ENCODE measurements at regions of chr3 and their contacts with region 1.

Region 1: GRCh38 chr3:66822186-66823008 is 175.7 kb upstream of the KBTBD8 start:
- DNase-seq: peak; percentile 46
- H3K4me3 ChIP-seq: no peak overlapping the region
- H3K27ac ChIP-seq: no peak overlapping the region
- H3K4me1 ChIP-seq: no peaks in the 10 kb centered on the region
- H3K27me3 ChIP-seq: no peaks in the 10 kb centered on the region
- CTCF ChIP-seq: peak; percentile 64

Region 2: DNA sequence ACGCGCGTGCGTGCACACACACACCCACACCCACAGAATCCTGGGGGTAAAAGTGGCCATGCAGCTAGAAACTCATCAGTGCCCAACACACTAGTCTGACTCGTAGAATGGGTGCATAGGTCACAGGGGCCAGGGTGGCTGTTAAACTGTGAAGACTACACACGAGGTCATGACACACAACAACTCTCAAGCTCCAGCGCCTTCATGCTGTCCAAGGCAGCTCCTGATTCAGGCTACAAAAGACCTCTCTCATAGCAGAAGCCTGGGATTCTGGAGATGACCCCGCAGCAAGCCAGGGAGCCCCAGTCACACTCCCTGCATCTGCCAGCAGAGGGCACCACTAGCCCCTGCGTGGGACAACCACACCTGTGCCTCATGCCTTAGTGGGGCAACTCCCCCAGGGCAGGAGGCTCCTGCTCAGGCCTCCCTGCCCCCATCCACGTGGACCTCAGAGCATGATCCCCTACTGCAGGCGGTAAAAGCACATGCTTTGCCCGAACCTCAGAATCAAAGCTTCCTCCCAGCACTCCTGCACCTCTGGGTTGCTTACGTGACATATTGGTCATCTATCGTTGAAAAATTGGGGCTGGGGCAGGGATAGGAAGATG is 414.7 kb before region 1 on chr3:
- CTCF ChIA-PET with region 1: interaction called, 4 read pairs
- POLR2A ChIA-PET with region 1: no interaction called
- intact Hi-C with region 1: loop called (anchors 2 kb)
- DNase-seq: peak; percentile 62
- H3K4me3 ChIP-seq: no peak overlapping the region
- H3K27ac ChIP-seq: no peak overlapping the region
- H3K4me1 ChIP-seq: no peaks in the 10 kb centered on the region
- H3K27me3 ChIP-seq: no peaks in the 10 kb centered on the region
- CTCF ChIP-seq: peak; percentile 75